ENCODE measurements at regions of chr20 and their contacts with region 1.

Region 1: GRCh38 chr20:35463455-35464300 is 8.3 kb downstream of the CEP250 start:
- DNase-seq: peak; percentile 67
- CTCF ChIP-seq: peak; percentile 79

Region 2: DNA sequence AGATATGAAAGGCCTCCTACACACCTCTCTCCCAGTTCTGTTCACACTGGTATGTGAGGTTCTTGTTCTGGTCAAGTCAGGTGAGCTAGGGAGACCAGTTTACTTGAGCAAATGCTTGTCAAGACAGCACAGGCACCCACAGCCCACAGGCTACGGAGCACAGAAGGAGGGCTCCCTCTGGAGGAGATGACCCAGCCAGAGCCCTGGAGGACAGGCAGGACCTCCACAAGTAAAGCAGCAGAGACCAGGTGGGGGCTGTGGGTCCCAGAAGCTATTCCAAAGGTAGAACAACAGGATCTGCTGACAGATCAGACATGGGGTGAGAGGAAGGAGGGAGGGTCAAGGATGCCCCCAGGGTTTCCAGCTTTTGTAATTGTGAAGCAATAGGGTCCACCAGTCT is 198.9 kb before region 1 on chr20:
- CTCF ChIA-PET with region 1: no interaction called
- POLR2A ChIA-PET with region 1: no interaction called
- DNase-seq: no peak
- CTCF ChIP-seq: peak; percentile 5

Region 3: DNA sequence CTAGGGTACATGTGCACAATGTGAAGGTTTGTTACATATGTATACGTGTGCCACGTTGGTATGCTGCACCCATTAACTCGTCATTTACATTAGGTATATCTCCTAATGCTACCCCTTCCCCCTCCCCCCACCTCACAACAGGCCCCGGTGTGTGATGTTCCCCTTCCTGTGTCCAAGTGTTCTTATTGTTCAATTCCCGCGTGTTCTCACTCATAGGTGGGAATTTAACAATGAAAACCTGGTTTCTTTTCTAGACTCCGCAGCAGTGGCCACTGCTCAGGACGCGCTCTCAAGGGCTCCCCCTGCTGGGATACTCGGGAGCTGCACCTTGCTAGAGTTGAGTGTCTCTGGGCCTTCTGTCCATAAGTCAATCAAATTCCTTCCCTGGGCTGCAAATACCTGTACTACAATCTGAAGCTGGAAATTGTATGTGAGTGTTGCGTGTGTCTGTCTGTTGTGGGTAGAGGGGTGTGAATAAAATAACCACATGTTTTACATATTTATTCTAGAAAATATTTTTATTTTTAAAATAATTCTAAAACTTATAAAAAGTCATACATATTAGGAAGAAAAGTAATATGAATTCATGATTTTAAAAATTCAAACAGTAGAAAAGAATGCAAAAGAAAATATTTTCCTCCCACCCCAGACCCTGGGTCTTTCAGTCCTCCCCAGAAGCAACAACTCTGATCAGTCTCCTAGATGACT is 16.4 kb before region 1 on chr20:
- CTCF ChIA-PET with region 1: interaction called, 31 read pairs
- POLR2A ChIA-PET with region 1: no interaction called
- DNase-seq: peak; percentile 83
- CTCF ChIP-seq: peak; percentile 97

Region 4: DNA sequence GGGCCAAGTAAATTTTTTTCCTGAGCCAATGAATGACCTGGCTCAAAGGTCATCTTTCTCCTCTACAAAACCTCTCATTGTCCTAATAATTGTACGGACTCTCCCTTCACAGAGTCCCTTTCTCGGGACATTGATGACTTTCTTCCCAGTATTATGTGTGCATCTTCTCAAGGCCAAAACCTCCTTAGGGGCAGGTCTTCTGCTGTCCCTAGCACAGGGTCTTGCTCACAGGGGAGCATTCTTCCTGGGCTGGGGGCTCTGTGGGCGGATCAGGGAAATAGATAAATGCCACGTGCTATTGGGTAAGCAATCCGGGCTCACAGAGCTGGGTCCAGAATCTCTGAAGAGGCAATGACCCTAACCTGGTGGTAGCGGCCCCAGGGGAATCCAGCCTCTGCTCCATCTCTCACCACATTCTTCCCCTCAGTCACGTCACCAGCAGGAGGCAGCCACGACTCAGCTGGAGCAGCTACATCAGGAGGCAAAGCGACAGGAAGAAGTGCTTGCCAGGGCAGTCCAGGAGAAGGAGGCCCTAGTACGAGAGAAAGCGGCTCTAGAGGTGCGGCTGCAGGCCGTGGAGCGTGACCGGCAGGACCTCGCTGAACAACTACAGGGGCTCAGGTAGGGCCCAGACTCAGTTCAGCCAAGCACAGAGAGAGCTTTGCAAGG is 15.3 kb after region 1 on chr20:
- CTCF ChIA-PET with region 1: interaction called, 28 read pairs
- POLR2A ChIA-PET with region 1: no interaction called
- DNase-seq: no peak
- CTCF ChIP-seq: peak; percentile 22

Region 5: DNA sequence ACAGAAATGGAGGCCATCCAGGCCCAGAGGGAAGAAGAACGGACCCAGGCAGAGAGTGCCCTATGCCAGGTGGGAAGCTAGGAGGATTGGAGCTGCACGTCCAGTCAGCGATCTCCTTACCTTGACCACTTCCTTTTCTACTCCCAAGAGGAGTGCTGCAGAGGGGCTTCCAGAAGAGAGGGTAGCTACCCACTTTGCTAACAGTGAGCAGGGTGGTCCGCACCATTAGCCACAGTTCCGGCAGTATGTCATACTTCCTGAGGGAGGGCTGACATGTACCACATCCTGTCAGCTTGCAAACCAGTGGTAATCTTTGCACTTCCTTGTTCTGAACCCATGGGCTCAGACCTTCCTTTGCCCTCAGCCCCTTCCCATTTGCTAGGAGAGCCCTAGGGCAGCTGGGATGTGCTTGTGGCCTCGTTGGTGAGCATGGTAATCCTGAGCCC is 27.1 kb after region 1 on chr20:
- CTCF ChIA-PET with region 1: interaction called, 11 read pairs
- POLR2A ChIA-PET with region 1: no interaction called
- DNase-seq: peak; percentile 83
- CTCF ChIP-seq: no peak

Region 6: GRCh38 chr20:35883778-35884540 is 420.3 kb after region 1 on chr20:
- CTCF ChIA-PET with region 1: interaction called, 20 read pairs
- POLR2A ChIA-PET with region 1: no interaction called
- DNase-seq: peak; percentile 54
- CTCF ChIP-seq: peak; percentile 70